Activated CD4-positive, alpha-beta T cell treated with anti-CD3 and anti-CD28 coated beads, Interleukin-2, amount 10 ng/mL, durations not matched to agents 24 days and 14 days (primary cell): ENCODE measurements at regions of chr11 and their contacts with region 1.

Region 1: DNA sequence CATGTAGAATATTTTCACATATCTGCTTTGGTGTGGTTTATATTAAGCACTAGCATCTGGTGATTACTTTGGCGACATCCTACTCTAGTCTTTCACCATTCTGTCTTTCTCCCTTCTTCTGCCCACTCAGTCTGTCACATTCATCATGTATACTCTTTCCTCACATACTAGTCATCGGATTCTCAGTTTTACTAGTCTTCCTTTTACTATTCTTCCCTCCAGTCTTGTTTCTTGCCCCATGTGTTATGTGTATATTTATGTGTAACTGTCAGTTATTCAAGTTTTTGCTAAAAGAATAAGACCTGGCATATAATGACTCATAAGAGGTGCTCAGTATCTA is 4.6 kb upstream of the DIXDC1 start:
- DNase-seq: no peak
- H3K4me3 Mint-ChIP-seq: peak overlapping the region; percentile 57
- H3K27ac Mint-ChIP-seq: peak overlapping the region; percentile 84
- H3K4me1 Mint-ChIP-seq: peaks cover 30% of the 10 kb centered on the region
- H3K27me3 Mint-ChIP-seq: no peaks in the 10 kb centered on the region

Region 2: DNA sequence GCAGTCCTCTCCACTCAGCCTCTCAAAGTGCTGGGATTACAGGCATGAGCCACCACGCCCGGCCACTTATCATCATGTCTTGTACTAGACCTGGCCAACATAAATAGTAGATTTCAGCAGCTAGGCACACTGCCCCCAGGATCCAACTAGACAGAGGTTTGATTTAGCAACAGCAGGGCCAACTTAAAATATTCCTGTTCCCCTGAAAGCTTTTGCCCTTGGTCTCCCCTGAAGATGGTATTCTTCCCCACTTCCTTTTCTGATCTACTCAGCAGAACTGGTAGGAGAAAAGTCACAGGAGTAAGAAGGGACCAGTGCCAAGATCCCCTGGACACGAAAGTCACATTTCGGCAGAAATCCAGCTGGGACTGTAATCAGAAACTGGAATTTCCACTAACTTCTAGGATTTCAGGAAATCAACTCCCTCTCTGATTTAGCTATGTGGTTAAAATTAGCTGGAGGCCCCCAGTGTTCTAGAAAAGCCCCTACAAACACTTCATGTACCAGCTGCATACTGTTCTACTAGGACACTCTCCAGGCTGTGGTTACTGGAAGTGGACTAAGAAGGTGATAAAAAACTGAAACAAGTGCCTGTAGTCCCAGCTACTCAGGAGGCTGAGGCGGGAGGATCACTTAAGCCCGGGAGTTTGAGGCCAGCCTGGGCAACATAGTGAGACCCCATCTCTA is 157.4 kb before region 1 on chr11:
- intact Hi-C with region 1: no loop called
- DNase-seq: no peak
- H3K4me3 Mint-ChIP-seq: no peak overlapping the region
- H3K27ac Mint-ChIP-seq: no peak overlapping the region
- H3K4me1 Mint-ChIP-seq: no peaks in the 10 kb centered on the region
- H3K27me3 Mint-ChIP-seq: no peaks in the 10 kb centered on the region

Region 3: GRCh38 chr11:111944651-111945051 is 12.1 kb after region 1 on chr11:
- intact Hi-C with region 1: loop called (anchors 1 kb)
- DNase-seq: peak; percentile 57
- H3K4me3 Mint-ChIP-seq: peak overlapping the region; percentile 50
- H3K27ac Mint-ChIP-seq: peak overlapping the region; percentile 95
- H3K4me1 Mint-ChIP-seq: peaks cover 37% of the 10 kb centered on the region
- H3K27me3 Mint-ChIP-seq: no peaks in the 10 kb centered on the region

Region 4: DNA sequence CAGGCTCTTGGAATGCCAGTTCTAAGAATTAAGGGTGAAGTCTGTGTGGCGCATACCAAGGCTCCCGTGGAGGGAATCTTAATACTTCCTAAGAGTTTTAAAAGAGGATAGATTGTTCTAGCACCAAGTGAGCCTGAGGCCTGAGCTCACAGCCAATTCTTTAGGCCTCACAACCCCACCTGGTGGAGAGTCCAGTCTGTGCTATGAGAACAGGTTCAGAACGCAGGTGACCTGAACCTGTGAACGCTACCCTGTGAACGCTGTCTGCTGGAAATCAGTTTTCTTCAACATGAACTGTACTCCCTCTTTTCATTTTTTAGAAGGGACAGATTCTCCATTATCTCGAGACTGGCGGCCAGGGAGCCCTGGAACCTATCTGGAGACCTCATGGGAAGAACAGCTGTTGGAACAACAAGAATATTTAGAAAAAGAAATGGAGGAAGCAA is 49.5 kb after region 1 on chr11:
- intact Hi-C with region 1: loop called (anchors 1 kb)
- DNase-seq: peak; percentile 85
- H3K4me3 Mint-ChIP-seq: no peak overlapping the region
- H3K27ac Mint-ChIP-seq: no peak overlapping the region
- H3K4me1 Mint-ChIP-seq: peaks cover 7% of the 10 kb centered on the region
- H3K27me3 Mint-ChIP-seq: peaks cover 3% of the 10 kb centered on the region

Region 5: DNA sequence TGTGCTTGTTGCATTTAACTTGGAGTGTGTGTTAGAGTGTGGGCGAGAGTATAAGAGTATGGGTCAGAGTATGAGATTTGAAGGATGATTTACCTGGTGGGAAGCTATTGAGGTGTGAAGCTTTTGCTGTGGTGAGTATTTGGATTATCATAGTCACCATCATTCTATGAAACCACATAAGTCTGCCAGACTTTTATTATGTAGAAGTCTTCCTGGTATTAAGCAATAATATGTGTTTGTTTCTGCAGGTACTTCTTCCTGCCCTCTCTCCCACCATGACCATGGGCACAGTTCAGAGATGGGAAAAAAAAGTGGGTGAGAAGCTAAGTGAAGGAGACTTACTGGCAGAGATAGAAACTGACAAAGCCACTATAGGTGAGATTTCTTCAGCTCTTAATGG is 100.6 kb after region 1 on chr11:
- intact Hi-C with region 1: no loop called
- DNase-seq: no peak
- H3K4me3 Mint-ChIP-seq: no peak overlapping the region
- H3K27ac Mint-ChIP-seq: no peak overlapping the region
- H3K4me1 Mint-ChIP-seq: peaks cover 3% of the 10 kb centered on the region
- H3K27me3 Mint-ChIP-seq: no peaks in the 10 kb centered on the region